ENCODE measurements at regions of chr5 and their contacts with region 1.

Region 1: GRCh38 chr5:149345147-149345875 is at the start of gene GRPEL2:
- DNase-seq: peak; percentile 62 to 90 (median 80)
- ATAC-seq: peak; percentile 78
- H3K4me3 ChIP-seq: peak within 1 kb of the TSS; percentile 90
- H3K4me3 Mint-ChIP-seq: peak within 1 kb of the TSS; percentile 80 to 97 (median 93)
- H3K27ac ChIP-seq: peak within 1 kb of the TSS; percentile 75
- H3K27ac Mint-ChIP-seq: peak within 1 kb of the TSS; percentile 89 to 95 (median 92)
- H3K4me1 ChIP-seq: peaks cover 37 to 43% of the 10 kb centered on the region in 2 donors
- H3K4me1 Mint-ChIP-seq: peaks cover 47 to 69% (median 59%) of the 10 kb centered on the region in 7 donors
- H3K27me3 ChIP-seq: no peaks in the 10 kb centered on the region
- H3K27me3 Mint-ChIP-seq: peaks cover 0 to 1% (median 0%) of the 10 kb centered on the region in 5 donors
- total RNA-seq, gene GRPEL2: 12.0 to 40.1 (median 32.2) TPM

Region 2: GRCh38 chr5:148826053-148826738 is 519.1 kb before region 1 on chr5 and contains the start of gene ADRB2:
- CTCF ChIA-PET with region 1: no interaction called
- POLR2A ChIA-PET with region 1: no interaction called
- intact Hi-C with region 1: loop called (anchors 5 to 10 kb)
- DNase-seq: peak; percentile 74 to 83 (median 79)
- ATAC-seq: peak; percentile 94
- H3K4me3 ChIP-seq: peak within 1 kb of the TSS; percentile 75
- H3K4me3 Mint-ChIP-seq: peak within 1 kb of the TSS; percentile 83 to 94 (median 89)
- H3K27ac ChIP-seq: peak within 1 kb of the TSS; percentile 54
- H3K27ac Mint-ChIP-seq: peak within 1 kb of the TSS; percentile 16 to 82 (median 70)
- H3K4me1 ChIP-seq: peaks cover 7 to 18% of the 10 kb centered on the region in 2 donors
- H3K4me1 Mint-ChIP-seq: peaks cover 20 to 43% (median 31%) of the 10 kb centered on the region in 7 donors
- H3K27me3 ChIP-seq: no peaks in the 10 kb centered on the region
- H3K27me3 Mint-ChIP-seq: peaks cover 0 to 76% (median 5%) of the 10 kb centered on the region in 5 donors
- total RNA-seq, gene ADRB2: 0.36 to 14.4 (median 1.3) TPM

Region 3: DNA sequence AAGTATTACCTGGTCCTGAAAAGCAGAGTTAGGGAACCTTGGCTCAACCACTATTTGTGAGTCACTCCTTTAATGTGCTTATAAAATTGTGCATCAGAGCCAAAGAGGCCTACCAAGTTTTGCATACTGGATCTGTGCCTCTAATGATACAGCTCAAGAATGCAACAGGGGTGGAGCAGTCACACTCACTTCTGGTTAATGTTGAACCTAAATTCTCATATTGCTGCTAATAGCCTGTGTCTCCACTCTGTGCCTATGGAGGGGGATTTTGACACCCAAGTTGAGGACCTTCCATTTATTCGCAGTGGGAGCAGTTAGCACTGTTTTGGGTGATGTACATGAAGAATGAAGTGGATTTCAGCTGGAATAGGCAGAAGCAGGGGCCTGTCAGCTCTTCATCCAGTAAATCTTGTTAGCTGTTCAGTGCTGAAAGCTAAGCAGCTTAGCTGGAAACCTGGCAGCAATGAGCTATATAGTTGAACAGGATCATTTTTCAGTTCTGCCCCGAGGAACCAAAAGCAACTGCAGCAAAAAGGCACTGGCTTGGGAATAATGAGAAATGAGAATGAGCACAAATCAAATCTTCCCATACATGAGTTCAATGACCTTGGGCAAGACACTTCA is 292.1 kb before region 1 on chr5:
- CTCF ChIA-PET with region 1: no interaction called
- POLR2A ChIA-PET with region 1: no interaction called
- intact Hi-C with region 1: no loop called
- DNase-seq: no peak
- ATAC-seq: no peak
- H3K4me3 ChIP-seq: no peak overlapping the region
- H3K4me3 Mint-ChIP-seq: no peak overlapping the region
- H3K27ac ChIP-seq: no peak overlapping the region
- H3K27ac Mint-ChIP-seq: no peak overlapping the region
- H3K4me1 ChIP-seq: no peaks in the 10 kb centered on the region
- H3K4me1 Mint-ChIP-seq: no peaks in the 10 kb centered on the region
- H3K27me3 ChIP-seq: no peaks in the 10 kb centered on the region
- H3K27me3 Mint-ChIP-seq: peaks cover 0 to 21% (median 7%) of the 10 kb centered on the region in 5 donors

Region 4: DNA sequence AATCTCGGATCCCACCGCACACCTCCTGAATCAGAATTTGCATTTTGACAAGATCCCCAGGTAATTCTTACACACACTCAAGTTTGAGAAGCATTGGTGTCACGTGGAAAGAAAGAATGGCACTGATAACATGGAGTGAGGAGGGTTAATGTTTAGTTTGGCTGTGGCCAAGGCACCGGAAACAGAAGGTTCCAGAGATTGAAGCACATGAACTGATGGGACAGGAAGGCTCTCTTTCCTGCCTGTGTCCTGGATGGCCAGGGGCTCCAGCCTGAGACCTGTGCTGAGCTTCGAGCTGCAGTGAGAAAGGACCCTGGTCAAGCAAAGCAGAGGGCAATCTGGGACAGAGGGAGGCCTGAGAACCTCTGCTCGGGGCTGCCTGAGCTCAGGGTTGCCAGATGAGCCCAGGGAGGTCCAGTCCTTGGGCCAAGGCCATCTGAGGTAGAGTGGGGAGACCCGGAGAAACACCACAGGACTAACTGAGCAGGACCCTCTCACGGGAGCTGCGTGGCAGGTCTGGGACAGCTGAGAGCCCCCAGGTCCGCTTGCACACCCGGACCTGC is 46.4 kb before region 1 on chr5:
- CTCF ChIA-PET with region 1: no interaction called
- POLR2A ChIA-PET with region 1: interaction called, 3 read pairs
- intact Hi-C with region 1: loop called in 1 of 2 experiments (anchors 2 kb)
- DNase-seq: no peak
- ATAC-seq: no peak
- H3K4me3 ChIP-seq: no peak overlapping the region
- H3K4me3 Mint-ChIP-seq: peak overlapping the region in 9 of 10 donors; percentile 23 to 84 (median 71)
- H3K27ac ChIP-seq: no peak overlapping the region
- H3K27ac Mint-ChIP-seq: peak overlapping the region in 8 of 9 donors; percentile 60 to 95 (median 84)
- H3K4me1 ChIP-seq: peaks cover 0 to 56% of the 10 kb centered on the region in 2 donors
- H3K4me1 Mint-ChIP-seq: peaks cover 4 to 67% (median 57%) of the 10 kb centered on the region in 7 donors
- H3K27me3 ChIP-seq: no peaks in the 10 kb centered on the region
- H3K27me3 Mint-ChIP-seq: peaks cover 0 to 11% (median 0%) of the 10 kb centered on the region in 5 donors

Region 5: GRCh38 chr5:149357370-149358293 is 12.3 kb after region 1 on chr5 and contains the start of gene PCYOX1L:
- CTCF ChIA-PET with region 1: interaction called, 12 read pairs
- POLR2A ChIA-PET with region 1: interaction called, 258 read pairs
- intact Hi-C with region 1: loop called (anchors 1 kb)
- DNase-seq: peak; percentile 88 to 98 (median 94)
- ATAC-seq: peak; percentile 99
- H3K4me3 ChIP-seq: peak within 1 kb of the TSS; percentile 80
- H3K4me3 Mint-ChIP-seq: peak within 1 kb of the TSS; percentile 80 to 99 (median 94)
- H3K27ac ChIP-seq: peak within 1 kb of the TSS; percentile 83
- H3K27ac Mint-ChIP-seq: peak within 1 kb of the TSS; percentile 83 to 96 (median 92)
- H3K4me1 ChIP-seq: peaks cover 15 to 36% of the 10 kb centered on the region in 2 donors
- H3K4me1 Mint-ChIP-seq: peaks cover 41 to 82% (median 65%) of the 10 kb centered on the region in 7 donors
- H3K27me3 ChIP-seq: no peaks in the 10 kb centered on the region
- H3K27me3 Mint-ChIP-seq: no peaks in the 10 kb centered on the region
- total RNA-seq, gene PCYOX1L: 29.7 to 53.7 (median 36.3) TPM

Region 6: GRCh38 chr5:149376104-149376503 is 30.8 kb after region 1 on chr5:
- CTCF ChIA-PET with region 1: interaction called, 16 read pairs
- POLR2A ChIA-PET with region 1: interaction called, 10 read pairs
- intact Hi-C with region 1: loop called in 1 of 2 experiments (anchors 1 kb)
- DNase-seq: no peak
- ATAC-seq: no peak
- H3K4me3 ChIP-seq: no peak overlapping the region
- H3K4me3 Mint-ChIP-seq: no peak overlapping the region
- H3K27ac ChIP-seq: no peak overlapping the region
- H3K27ac Mint-ChIP-seq: no peak overlapping the region
- H3K4me1 ChIP-seq: no peaks in the 10 kb centered on the region
- H3K4me1 Mint-ChIP-seq: peaks cover 0 to 6% (median 5%) of the 10 kb centered on the region in 7 donors
- H3K27me3 ChIP-seq: no peaks in the 10 kb centered on the region
- H3K27me3 Mint-ChIP-seq: no peaks in the 10 kb centered on the region

Region 7: DNA sequence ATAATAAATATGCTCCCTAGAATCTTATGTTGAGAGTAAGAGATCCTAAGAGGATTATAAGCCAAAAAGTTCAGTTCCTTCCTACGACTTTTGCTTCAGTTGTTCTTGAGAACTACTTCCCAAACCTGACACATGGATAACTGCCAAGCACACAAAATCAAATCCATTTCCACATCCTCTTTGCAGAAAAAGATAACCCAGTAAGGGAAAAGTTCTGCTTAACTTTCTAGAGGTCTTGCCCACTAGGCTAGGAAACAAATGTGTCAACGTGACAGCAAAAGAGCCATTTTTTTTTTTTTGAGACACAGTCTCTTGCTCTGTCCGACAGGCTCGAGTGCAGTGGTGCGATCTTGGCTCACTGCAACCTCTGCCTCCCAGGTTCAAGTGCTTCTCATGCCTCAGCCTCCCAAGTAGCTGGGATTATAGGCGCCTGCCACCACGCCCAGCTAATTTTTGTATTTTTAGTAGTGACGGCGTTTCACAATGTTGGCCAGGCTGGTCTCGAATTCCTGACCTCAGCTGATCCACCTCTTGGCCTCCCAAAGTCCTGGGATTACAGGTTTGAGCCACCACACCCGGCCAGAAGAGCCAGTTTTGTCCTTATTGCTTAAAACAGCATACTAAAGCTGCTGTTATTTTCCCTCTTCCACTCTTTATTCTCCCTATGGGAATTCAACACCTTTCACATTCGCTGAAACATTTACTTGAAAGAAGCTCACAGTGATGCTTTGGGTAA is 181.7 kb after region 1 on chr5:
- CTCF ChIA-PET with region 1: no interaction called
- POLR2A ChIA-PET with region 1: no interaction called
- intact Hi-C with region 1: no loop called
- DNase-seq: no peak
- ATAC-seq: no peak
- H3K4me3 ChIP-seq: no peak overlapping the region
- H3K4me3 Mint-ChIP-seq: peak overlapping the region in 9 of 10 donors; percentile 12 to 65 (median 51)
- H3K27ac ChIP-seq: no peak overlapping the region
- H3K27ac Mint-ChIP-seq: peak overlapping the region in 8 of 9 donors; percentile 0 to 86 (median 54)
- H3K4me1 ChIP-seq: peaks cover 37 to 51% of the 10 kb centered on the region in 2 donors
- H3K4me1 Mint-ChIP-seq: peaks cover 61 to 100% (median 89%) of the 10 kb centered on the region in 7 donors
- H3K27me3 ChIP-seq: no peaks in the 10 kb centered on the region
- H3K27me3 Mint-ChIP-seq: no peaks in the 10 kb centered on the region

Region 8: GRCh38 chr5:149960272-149961185 is 615.2 kb after region 1 on chr5 and contains the start of gene SLC26A2:
- CTCF ChIA-PET with region 1: no interaction called
- POLR2A ChIA-PET with region 1: interaction called, 3 read pairs
- intact Hi-C with region 1: loop called in 1 of 2 experiments (anchors 2 kb)
- DNase-seq: peak; percentile 78 to 92 (median 91)
- ATAC-seq: peak; percentile 99
- H3K4me3 ChIP-seq: peak within 1 kb of the TSS; percentile 98
- H3K4me3 Mint-ChIP-seq: peak within 1 kb of the TSS; percentile 90 to 100 (median 96)
- H3K27ac ChIP-seq: peak within 1 kb of the TSS; percentile 77
- H3K27ac Mint-ChIP-seq: peak within 1 kb of the TSS; percentile 94 to 98 (median 97)
- H3K4me1 ChIP-seq: peaks cover 16 to 28% of the 10 kb centered on the region in 2 donors
- H3K4me1 Mint-ChIP-seq: peaks cover 14 to 43% (median 37%) of the 10 kb centered on the region in 7 donors
- H3K27me3 ChIP-seq: no peaks in the 10 kb centered on the region
- H3K27me3 Mint-ChIP-seq: no peaks in the 10 kb centered on the region
- total RNA-seq, gene SLC26A2: 5.2 to 16.5 (median 9.6) TPM

Region 9: DNA sequence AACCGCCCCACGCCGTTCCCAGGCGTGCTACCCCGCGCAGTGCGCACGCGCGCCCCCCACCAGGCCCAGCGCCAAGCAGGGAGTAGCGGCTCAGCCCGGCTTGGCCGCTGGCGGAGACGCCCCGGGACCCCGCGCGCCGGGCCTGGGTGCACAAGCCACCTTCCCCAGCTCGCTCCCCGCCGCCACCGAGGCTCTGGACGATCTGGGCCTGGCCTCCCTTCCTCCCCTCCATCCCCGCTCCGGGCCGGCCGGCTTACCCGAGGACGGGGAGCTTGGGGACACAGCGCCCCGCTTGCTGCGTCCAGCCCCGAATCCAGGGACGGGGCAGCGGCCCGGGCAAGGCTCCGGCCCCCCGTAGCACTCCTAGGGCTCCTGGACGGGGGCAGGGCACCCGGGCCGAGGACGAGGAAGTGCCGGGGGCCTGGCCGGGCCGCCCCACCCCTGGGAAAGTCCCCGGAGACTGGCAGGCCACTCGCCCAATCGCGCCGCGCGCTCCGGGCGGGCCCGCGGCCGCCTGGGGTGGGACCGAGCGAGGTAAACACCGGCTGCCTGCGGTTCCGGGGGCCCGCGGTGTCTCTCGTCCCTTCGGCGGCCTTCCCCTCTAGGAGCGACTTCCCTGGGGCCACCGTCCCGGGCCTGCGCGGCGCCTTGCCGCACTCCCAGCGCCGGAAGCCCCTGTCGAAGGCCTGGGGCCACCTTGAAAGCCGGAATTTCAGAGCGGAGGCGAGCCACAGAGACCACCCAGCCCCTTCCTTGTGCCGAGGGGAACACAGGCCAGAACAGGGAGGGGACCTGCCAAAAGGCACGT is 1735.5 kb after region 1 on chr5 and contains the start of gene TNIP1:
- CTCF ChIA-PET with region 1: no interaction called
- POLR2A ChIA-PET with region 1: no interaction called
- intact Hi-C with region 1: loop called (anchors 2 to 10 kb)
- DNase-seq: peak; percentile 86 to 99 (median 90)
- ATAC-seq: peak; percentile 94
- H3K4me3 ChIP-seq: peak within 1 kb of the TSS; percentile 86
- H3K4me3 Mint-ChIP-seq: peak within 1 kb of the TSS; percentile 85 to 95 (median 90)
- H3K27ac ChIP-seq: peak within 1 kb of the TSS; percentile 96
- H3K27ac Mint-ChIP-seq: peak within 1 kb of the TSS; percentile 86 to 95 (median 91)
- H3K4me1 ChIP-seq: peaks cover 37 to 69% of the 10 kb centered on the region in 2 donors
- H3K4me1 Mint-ChIP-seq: peaks cover 53 to 84% (median 73%) of the 10 kb centered on the region in 7 donors
- H3K27me3 ChIP-seq: no peaks in the 10 kb centered on the region
- H3K27me3 Mint-ChIP-seq: no peaks in the 10 kb centered on the region
- total RNA-seq, gene TNIP1: 124 to 234 (median 131) TPM